Activated CD4-positive, alpha-beta memory T cell treated with anti-CD3 and anti-CD28 coated beads for 36 hours (primary cell): ENCODE measurements at regions of chr19 and their contacts with region 1.

Region 1: DNA sequence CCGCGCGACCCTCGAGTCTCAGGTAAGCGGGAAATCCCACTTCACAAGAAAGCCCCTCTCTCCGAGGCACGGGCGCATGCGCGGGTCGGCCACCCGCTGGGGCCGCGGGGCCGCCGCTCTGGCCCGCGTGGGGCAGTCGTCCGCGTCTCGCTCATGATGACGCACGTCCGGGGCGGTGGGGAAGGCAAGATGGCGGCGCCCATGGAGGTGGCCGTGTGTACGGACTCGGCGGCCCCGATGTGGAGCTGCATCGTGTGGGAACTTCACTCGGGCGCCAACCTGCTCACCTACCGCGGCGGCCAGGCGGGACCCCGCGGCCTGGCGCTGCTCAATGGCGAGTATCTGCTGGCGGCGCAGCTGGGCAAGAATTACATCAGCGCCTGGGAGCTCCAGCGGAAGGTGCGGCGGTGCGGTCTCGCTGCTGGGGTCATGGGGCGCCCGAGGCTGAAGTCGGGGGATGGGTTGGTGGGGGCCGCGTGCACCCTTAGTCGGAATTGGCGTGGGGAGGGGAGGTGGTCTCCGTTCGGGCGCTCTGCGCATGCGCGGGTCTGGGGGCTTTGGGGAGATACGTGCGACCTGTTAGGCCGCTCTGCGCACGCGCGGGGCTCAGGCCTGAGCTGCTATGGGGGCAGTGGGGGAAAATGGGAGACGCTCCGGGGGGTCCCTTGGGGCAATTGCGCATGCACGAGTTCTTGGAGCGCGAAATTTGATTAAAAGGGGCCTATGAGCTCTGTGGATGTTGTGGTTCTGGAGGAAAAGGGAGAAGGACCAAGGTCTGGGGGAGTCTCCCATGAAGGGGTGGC is at the start of gene WDR18:
- DNase-seq: peak; percentile 94
- H3K4me3 Mint-ChIP-seq: peak within 1 kb of the TSS; percentile 94
- H3K27ac Mint-ChIP-seq: peak within 1 kb of the TSS; percentile 90
- H3K4me1 Mint-ChIP-seq: peaks cover 20% of the 10 kb centered on the region
- H3K27me3 Mint-ChIP-seq: no peaks in the 10 kb centered on the region
- total RNA-seq, gene WDR18: 73.3 to 75.8 TPM

Region 2: DNA sequence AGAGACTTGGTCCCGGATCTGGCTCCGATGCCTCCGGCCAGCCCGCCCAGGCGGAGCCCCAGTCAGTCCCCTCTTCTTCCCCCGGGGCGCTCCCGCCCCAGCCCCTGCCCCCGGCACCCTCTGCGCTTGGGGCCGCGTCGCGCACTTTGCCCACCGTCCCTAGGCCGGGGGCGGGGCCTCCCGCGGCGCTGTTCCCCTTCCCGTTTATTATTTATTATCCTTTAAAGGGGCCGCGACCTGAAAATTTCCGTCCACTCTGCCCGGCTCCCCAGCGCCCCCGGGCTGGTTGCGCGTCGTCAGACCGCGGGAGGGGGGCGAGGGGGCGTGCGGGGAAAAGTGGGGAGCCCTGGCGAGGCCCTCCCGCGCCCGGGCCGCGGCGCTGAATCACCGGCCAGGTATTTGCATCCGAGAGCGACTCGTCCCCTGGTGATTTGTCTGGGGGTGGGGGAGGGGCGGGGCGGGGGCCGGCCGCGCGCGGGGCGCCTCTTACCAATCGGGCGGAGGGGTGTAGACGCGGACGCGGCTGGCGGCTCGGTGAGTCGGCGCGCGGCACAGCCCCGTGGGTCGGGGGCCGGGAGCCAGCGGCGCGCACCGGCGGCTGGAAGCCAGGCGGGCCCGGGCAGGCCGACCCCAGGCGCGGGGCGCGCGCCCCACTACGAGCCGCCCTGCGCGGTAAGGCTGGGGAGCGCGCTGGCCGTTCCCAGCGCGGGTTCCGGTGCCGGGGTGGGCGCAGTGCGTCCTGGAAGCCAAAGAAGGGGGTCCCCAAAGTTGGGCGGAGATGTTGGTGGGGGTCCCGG is 58.6 kb before region 1 on chr19 and contains the start of gene ARID3A:
- CTCF ChIA-PET with region 1: interaction called, 189 read pairs
- POLR2A ChIA-PET with region 1: interaction called, 21 read pairs
- intact Hi-C with region 1: loop called (anchors 1 kb)
- DNase-seq: peak; percentile 80
- H3K4me3 Mint-ChIP-seq: peak within 1 kb of the TSS; percentile 75
- H3K27ac Mint-ChIP-seq: peak within 1 kb of the TSS; percentile 71
- H3K4me1 Mint-ChIP-seq: peaks cover 12% of the 10 kb centered on the region
- H3K27me3 Mint-ChIP-seq: no peaks in the 10 kb centered on the region
- total RNA-seq, gene ARID3A: 28.5 to 30.6 TPM

Region 3: GRCh38 chr19:937259-937694 is 47.1 kb before region 1 on chr19:
- CTCF ChIA-PET with region 1: interaction called, 14 read pairs
- POLR2A ChIA-PET with region 1: no interaction called
- intact Hi-C with region 1: no loop called
- DNase-seq: peak; percentile 68
- H3K4me3 Mint-ChIP-seq: no peak overlapping the region
- H3K27ac Mint-ChIP-seq: no peak overlapping the region
- H3K4me1 Mint-ChIP-seq: peaks cover 30% of the 10 kb centered on the region
- H3K27me3 Mint-ChIP-seq: no peaks in the 10 kb centered on the region